Activated T-helper 1 cell treated with anti-CD3 and anti-CD28 coated beads, Interleukin-12 subunit alpha, Interleukin-12 subunit beta, Interleukin-2, Interleukin-4 antibody, amounts not matched to agents 30 ng/mL and 10 ng/mL and 1 ng/mL, durations not matched to agents 14 hours and 24 hours and 36 hours (primary cell): ENCODE measurements at regions of chr5 and their contacts with region 1.

Region 1: DNA sequence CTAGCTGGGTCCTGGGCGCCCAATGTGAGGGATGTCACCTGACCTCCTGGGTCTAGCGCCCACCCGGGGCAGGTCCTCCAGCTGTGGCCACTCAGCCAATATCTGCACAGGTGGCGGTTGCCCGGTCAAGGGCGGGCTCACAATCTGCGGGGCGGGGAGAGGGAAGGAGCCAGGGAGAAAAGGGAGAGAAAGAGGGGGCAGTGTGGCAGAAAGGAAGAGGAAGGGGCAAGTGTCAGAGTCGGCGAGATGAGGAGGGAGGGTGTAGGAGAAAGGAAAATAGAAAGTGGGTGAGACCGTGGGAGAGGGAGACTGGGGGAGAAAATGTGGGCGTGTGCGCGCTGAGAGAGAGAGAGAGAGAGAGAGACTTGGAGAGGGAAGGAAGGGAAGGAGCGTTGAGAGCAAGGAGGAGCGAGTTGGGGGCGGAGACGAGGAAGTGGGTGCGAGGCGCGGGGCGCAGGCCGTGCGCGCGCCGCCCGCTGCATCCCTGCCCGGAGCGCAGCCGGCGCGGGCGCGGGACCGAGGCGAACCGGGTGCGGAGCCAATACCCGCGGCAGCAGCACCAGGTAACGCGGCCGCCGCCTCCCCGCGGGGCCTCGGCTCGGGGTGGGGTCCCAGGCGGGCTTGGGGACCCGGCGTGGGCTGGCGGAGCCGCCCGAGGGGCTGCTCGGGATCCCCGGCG is at the start of gene HRH2:
- DNase-seq: peak; percentile 62
- H3K4me3 Mint-ChIP-seq: peak within 1 kb of the TSS; percentile 98
- H3K27ac Mint-ChIP-seq: peak within 1 kb of the TSS; percentile 96
- H3K4me1 Mint-ChIP-seq: peaks cover 87% of the 10 kb centered on the region
- H3K27me3 Mint-ChIP-seq: peaks cover 2% of the 10 kb centered on the region
- total RNA-seq, gene HRH2: 94.7 and 96.9 TPM in 2 replicates

Region 2: GRCh38 chr5:175141421-175141820 is 516.3 kb before region 1 on chr5:
- intact Hi-C with region 1: no loop called
- DNase-seq: no peak
- H3K4me3 Mint-ChIP-seq: no peak overlapping the region
- H3K27ac Mint-ChIP-seq: no peak overlapping the region
- H3K4me1 Mint-ChIP-seq: no peaks in the 10 kb centered on the region
- H3K27me3 Mint-ChIP-seq: no peaks in the 10 kb centered on the region

Region 3: GRCh38 chr5:175478384-175479124 is 179.2 kb before region 1 on chr5 and contains the start of gene SFXN1:
- intact Hi-C with region 1: loop called (anchors 1 kb)
- DNase-seq: peak; percentile 84
- H3K4me3 Mint-ChIP-seq: peak within 1 kb of the TSS; percentile 96
- H3K27ac Mint-ChIP-seq: peak within 1 kb of the TSS; percentile 84
- H3K4me1 Mint-ChIP-seq: peaks cover 62% of the 10 kb centered on the region
- H3K27me3 Mint-ChIP-seq: peaks cover 12% of the 10 kb centered on the region
- total RNA-seq, gene SFXN1: 394 and 397 TPM in 2 replicates

Region 4: GRCh38 chr5:175534070-175534932 is 123.4 kb before region 1 on chr5:
- intact Hi-C with region 1: loop called (anchors 1 kb)
- DNase-seq: peak; percentile 79
- H3K4me3 Mint-ChIP-seq: peak overlapping the region; percentile 73
- H3K27ac Mint-ChIP-seq: peak overlapping the region; percentile 78
- H3K4me1 Mint-ChIP-seq: peaks cover 68% of the 10 kb centered on the region
- H3K27me3 Mint-ChIP-seq: no peaks in the 10 kb centered on the region

Region 5: DNA sequence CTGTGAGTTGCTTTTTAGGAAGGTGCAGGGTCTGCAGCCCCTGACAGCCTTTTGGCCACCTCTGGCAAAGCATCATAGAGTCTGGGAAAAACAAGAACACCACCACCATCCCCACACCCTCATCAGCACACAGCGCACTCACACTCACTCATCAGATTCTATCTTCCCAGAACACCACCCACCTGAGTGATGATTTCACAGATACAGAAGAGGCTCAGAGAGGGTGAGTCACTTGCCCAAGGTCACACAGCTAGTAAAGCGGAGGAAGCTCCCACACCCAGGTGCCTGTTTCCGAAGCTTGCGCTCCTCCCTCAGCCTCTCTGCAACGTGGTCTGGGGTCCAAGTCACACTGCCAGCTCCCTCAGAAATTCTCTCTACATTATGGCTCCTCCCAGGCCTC is 41.6 kb before region 1 on chr5:
- intact Hi-C with region 1: loop called (anchors 1 kb)
- DNase-seq: no peak
- H3K4me3 Mint-ChIP-seq: no peak overlapping the region
- H3K27ac Mint-ChIP-seq: no peak overlapping the region
- H3K4me1 Mint-ChIP-seq: peaks cover 19% of the 10 kb centered on the region
- H3K27me3 Mint-ChIP-seq: peaks cover 8% of the 10 kb centered on the region

Region 6: DNA sequence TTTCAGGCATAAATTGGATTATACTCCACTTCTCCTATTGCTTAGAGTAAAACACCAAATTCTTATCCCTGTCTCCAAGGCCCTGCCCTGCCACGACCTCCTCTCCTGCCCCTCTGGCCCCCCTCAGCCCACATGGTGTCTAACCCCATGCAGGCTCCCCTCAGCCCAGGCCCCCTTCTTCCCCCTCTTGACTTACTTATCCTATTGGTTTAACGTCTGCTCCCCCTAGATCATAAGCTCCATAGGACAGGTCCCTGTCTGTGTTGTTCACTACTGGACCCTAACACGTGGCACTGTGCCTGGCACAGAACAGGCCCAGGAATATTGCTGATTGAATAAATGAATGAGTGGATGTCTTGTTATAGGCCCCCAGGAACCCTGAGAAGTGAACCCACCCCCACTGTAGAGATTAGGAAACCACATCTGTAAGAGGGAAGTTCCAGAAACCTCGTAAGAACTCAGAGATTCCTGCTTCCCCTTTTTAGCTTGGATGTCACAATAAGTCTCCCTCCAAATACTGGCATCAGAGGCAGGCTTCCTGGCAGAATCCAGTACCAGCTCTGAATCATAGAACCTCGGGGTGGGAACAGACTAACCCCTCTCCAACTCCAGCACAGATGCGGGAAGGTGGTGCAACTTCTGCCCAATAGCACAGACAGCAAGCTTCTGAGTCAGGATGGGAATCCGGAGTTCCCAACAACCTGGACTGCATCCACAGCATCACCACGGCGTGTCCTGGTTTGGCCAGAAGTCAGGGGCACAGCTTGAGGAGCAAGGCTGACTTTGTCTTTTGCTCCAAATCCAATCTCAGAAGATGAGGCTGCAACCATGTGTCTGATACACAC is 31.6 kb after region 1 on chr5:
- intact Hi-C with region 1: no loop called
- DNase-seq: no peak
- H3K4me3 Mint-ChIP-seq: no peak overlapping the region
- H3K27ac Mint-ChIP-seq: peak overlapping the region; percentile 61
- H3K4me1 Mint-ChIP-seq: peaks cover 43% of the 10 kb centered on the region
- H3K27me3 Mint-ChIP-seq: no peaks in the 10 kb centered on the region

Region 7: DNA sequence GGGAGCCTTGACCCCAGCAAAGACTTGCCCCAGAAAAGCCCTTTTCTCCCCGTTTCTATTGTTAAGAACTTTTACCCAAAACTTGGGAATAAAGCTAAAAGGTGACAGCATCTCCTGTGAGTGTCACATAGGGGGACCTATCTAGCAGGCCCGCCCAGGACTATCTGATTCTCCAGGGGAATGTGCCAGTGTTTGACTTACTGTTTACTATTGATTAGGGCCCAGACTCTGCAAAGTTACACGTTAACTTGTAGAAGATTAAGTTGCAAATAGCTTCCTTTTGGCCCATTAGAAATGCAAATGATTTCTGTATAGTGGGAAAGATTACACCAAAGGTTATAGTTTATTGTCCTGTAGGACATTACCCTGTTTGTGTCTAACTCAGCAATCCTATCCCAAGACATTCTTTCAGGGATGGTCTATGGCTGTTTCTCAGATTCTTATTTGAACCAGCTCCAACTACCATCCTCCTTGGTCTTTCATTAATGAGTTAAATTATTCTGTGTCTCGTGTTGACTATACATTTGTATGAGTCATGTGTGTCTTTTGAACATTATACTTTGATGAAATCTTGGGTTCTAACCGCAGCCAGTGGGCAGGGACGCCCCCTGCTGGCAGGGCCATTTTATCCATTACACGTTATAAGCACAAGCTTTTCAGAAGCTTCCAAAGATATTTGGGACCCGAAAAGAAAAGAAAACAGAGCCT is 60.8 kb after region 1 on chr5:
- intact Hi-C with region 1: loop called (anchors 2 kb)
- DNase-seq: peak; percentile 38
- H3K4me3 Mint-ChIP-seq: no peak overlapping the region
- H3K27ac Mint-ChIP-seq: no peak overlapping the region
- H3K4me1 Mint-ChIP-seq: peaks cover 7% of the 10 kb centered on the region
- H3K27me3 Mint-ChIP-seq: peaks cover 4% of the 10 kb centered on the region

Region 8: DNA sequence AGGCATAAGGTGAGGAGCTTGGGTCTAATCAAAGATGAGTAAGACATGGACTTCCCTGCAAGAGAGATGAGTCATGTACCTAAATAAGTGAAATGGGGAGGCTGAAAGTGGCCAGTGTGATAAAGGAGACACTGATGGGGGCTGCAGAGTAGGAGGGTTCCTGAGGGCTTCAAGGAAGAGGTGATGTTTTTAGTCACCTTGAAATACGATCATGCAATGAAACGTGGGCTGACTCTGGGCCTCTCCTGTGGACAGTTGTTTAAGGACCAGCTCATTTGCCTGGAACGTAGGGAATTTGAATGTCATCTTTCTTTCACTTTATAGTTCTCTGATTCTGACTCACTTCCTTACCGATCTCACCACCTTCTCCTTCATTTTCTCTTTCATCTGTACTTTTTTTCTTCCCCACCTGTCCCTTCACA is 164.1 kb after region 1 on chr5:
- intact Hi-C with region 1: loop called (anchors 5 kb)
- DNase-seq: no peak
- H3K4me3 Mint-ChIP-seq: peak overlapping the region; percentile 5
- H3K27ac Mint-ChIP-seq: peak overlapping the region; percentile 85
- H3K4me1 Mint-ChIP-seq: peaks cover 22% of the 10 kb centered on the region
- H3K27me3 Mint-ChIP-seq: peaks cover 4% of the 10 kb centered on the region

Region 9: DNA sequence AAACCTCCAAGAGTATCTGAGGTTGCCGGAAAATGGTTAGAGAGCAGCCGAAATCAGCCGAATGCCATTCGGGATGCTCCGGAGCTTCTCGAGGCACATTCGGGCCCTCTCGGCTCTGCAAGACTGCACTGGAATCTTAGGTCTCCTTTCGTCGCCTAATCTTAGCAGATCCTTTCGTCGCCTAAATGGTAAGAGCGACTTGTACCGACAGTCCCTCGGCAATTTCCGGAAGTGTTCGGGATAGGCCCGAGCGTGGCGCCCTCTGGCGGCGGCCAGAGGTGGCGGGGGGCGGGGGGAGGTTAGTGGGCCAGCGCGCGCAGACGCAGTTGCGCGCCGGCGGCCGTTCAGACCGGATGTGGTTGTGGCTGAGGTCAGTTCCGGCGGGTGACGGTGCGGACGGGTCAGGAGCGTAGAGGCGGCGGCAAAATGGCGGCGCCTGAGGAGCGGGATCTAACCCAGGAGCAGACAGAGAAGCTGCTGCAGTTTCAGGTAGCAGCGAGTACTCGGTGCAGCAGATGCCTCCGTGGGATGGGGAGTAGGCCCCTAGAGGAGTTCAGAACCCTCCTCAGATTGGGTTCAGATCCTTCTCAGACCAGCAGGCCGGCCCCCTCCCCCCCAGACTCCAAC is 790.4 kb after region 1 on chr5 and contains the start of gene FAF2:
- intact Hi-C with region 1: loop called (anchors 5 kb)
- DNase-seq: peak; percentile 99
- H3K4me3 Mint-ChIP-seq: peak within 1 kb of the TSS; percentile 97
- H3K27ac Mint-ChIP-seq: peak within 1 kb of the TSS; percentile 96
- H3K4me1 Mint-ChIP-seq: peaks cover 40% of the 10 kb centered on the region
- H3K27me3 Mint-ChIP-seq: peaks cover 2% of the 10 kb centered on the region
- total RNA-seq, gene FAF2: 46.0 and 47.3 TPM in 2 replicates